Right cardiac atrium (tissue), 5 donors: ENCODE measurements at regions of chr18 and their contacts with region 1.

Region 1: GRCh38 chr18:36129300-36130038 is at the starts of genes ELP2 and SLC39A6:
- DNase-seq: peak; percentile 97 to 99 (median 98)
- ATAC-seq: peak; percentile 99
- H3K4me3 ChIP-seq: peak within 1 kb of the TSS; percentile 69
- H3K27ac ChIP-seq: peak within 1 kb of the TSS; percentile 90
- H3K4me1 ChIP-seq: peaks cover 2% of the 10 kb centered on the region
- H3K27me3 ChIP-seq: no peaks in the 10 kb centered on the region
- total RNA-seq, gene ELP2: 48.9 to 56.6 (median 55.0) TPM
- total RNA-seq, gene SLC39A6: 12.3 to 17.1 (median 14.5) TPM

Region 2: GRCh38 chr18:36015629-36016028 is 113.8 kb before region 1 on chr18:
- intact Hi-C with region 1: loop called in 1 of 4 experiments (anchors 5 kb)
- DNase-seq: no peak
- ATAC-seq: no peak
- H3K4me3 ChIP-seq: no peak overlapping the region
- H3K27ac ChIP-seq: no peak overlapping the region
- H3K4me1 ChIP-seq: no peaks in the 10 kb centered on the region
- H3K27me3 ChIP-seq: no peaks in the 10 kb centered on the region

Region 3: GRCh38 chr18:36067055-36067957 is 62.2 kb before region 1 on chr18 and contains the start of gene RPRD1A:
- intact Hi-C with region 1: loop called in 1 of 4 experiments (anchors 10 kb)
- DNase-seq: peak; percentile 98 to 99 (median 99)
- ATAC-seq: peak; percentile 99
- H3K4me3 ChIP-seq: peak within 1 kb of the TSS; percentile 89
- H3K27ac ChIP-seq: peak within 1 kb of the TSS; percentile 86
- H3K4me1 ChIP-seq: no peaks in the 10 kb centered on the region
- H3K27me3 ChIP-seq: no peaks in the 10 kb centered on the region
- total RNA-seq, gene RPRD1A: 45.1 to 51.0 (median 46.9) TPM

Region 4: DNA sequence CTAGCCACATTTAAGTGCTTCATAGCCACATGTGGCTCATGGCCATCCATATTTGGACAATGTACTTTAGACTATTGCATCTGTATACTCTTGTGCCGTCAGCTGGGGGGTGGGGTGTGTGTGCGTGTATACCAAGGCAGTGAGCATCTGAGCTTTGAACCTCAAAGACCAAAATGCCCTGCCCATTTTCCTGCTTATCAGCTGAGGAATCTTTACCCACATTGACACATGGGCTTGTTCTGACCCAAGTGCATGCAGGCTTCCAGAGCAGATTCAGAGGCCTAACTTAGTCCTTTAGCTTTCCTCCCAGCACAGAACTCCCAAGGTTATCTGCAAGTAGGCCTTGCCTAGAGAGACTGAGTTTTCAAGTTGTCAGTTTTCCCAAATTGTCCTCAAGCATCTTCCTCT is 46.7 kb after region 1 on chr18:
- intact Hi-C with region 1: no loop called
- DNase-seq: no peak
- ATAC-seq: no peak
- H3K4me3 ChIP-seq: no peak overlapping the region
- H3K27ac ChIP-seq: no peak overlapping the region
- H3K4me1 ChIP-seq: no peaks in the 10 kb centered on the region
- H3K27me3 ChIP-seq: no peaks in the 10 kb centered on the region

Region 5: GRCh38 chr18:36186911-36187834 is 57.7 kb after region 1 on chr18 and contains the start of gene MOCOS:
- intact Hi-C with region 1: no loop called
- DNase-seq: peak; percentile 79 to 93 (median 89)
- ATAC-seq: peak; percentile 96 to 97
- H3K4me3 ChIP-seq: peak within 1 kb of the TSS; percentile 81
- H3K27ac ChIP-seq: no peak within 1 kb of the TSS
- H3K4me1 ChIP-seq: no peaks in the 10 kb centered on the region
- H3K27me3 ChIP-seq: no peaks in the 10 kb centered on the region
- total RNA-seq, gene MOCOS: 0.57 to 0.64 (median 0.59) TPM